Activated CD8-positive, alpha-beta memory T cell treated with anti-CD3 and anti-CD28 coated beads, Interleukin-2, amount 10 ng/mL, durations not matched to agents 7 days and 5 days (primary cell): ENCODE measurements at regions of chr4 and their contacts with region 1.

Region 1: GRCh38 chr4:123564758-123565346 is 168.3 kb downstream of the SPRY1 start:
- DNase-seq: peak; percentile 81
- ATAC-seq: peak; percentile 100
- H3K4me3 Mint-ChIP-seq: no peak overlapping the region
- H3K27ac Mint-ChIP-seq: no peak overlapping the region
- H3K4me1 Mint-ChIP-seq: peaks cover 13% of the 10 kb centered on the region
- H3K27me3 Mint-ChIP-seq: peaks cover 4% of the 10 kb centered on the region

Region 2: GRCh38 chr4:123396307-123397143 is 168.3 kb before region 1 on chr4 and contains the start of gene SPRY1:
- CTCF ChIA-PET with region 1: interaction called, 14 read pairs
- DNase-seq: peak; percentile 95
- ATAC-seq: peak; percentile 63
- H3K4me3 Mint-ChIP-seq: peak within 1 kb of the TSS; percentile 92
- H3K27ac Mint-ChIP-seq: peak within 1 kb of the TSS; percentile 92
- H3K4me1 Mint-ChIP-seq: peaks cover 24% of the 10 kb centered on the region
- H3K27me3 Mint-ChIP-seq: peaks cover 7% of the 10 kb centered on the region
- total RNA-seq, gene SPRY1: 73.7 to 126 TPM

Region 3: GRCh38 chr4:123580981-123581664 is 16.3 kb after region 1 on chr4:
- CTCF ChIA-PET with region 1: interaction called, 21 read pairs
- DNase-seq: no peak
- ATAC-seq: no peak
- H3K4me3 Mint-ChIP-seq: no peak overlapping the region
- H3K27ac Mint-ChIP-seq: no peak overlapping the region
- H3K4me1 Mint-ChIP-seq: peaks cover 1% of the 10 kb centered on the region
- H3K27me3 Mint-ChIP-seq: no peaks in the 10 kb centered on the region

Region 4: DNA sequence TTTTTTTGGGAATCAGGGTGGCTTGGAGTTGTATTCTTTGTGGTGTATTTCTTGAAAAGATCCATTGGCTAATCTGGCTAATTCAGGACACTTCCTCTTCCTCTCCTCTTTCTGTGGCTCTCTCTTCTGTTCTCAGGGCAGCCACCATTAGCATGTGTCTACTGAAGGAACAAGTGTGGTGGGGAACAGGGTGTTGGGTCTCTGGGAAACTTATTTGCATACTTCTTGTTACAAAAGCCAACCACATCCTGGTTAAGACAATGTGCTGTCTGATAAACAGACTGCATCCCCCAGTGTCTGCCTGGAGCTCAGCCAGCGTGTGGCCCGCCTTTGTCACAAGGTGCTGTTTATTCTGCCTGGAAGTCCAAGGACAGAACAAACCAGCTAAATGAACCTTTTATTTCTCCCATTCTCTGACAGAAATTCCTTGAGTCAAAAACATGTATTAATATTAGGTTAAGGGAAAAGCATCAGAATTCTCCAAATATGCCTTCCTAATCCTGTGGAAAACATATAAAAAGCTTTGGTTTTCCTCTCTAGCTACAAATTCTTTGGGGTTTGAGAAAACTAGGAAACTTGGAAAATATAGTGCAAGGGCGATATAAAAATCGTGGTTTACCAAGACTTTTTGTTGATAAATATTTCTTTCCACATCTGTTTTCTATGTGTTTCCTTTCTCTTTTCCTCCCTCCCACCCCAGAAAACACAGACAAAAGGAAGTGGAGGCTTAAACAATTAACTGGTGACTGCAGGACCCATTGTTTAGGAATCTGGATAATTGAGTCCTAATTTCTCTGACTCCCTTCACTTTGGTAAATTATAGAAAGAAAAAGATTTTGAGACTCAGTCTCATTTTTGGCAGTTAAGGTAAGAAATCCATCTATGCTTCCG is 35.3 kb after region 1 on chr4:
- CTCF ChIA-PET with region 1: interaction called, 12 read pairs
- DNase-seq: peak; percentile 84
- ATAC-seq: peak; percentile 97
- H3K4me3 Mint-ChIP-seq: peak overlapping the region; percentile 8
- H3K27ac Mint-ChIP-seq: peak overlapping the region; percentile 86
- H3K4me1 Mint-ChIP-seq: peaks cover 62% of the 10 kb centered on the region
- H3K27me3 Mint-ChIP-seq: no peaks in the 10 kb centered on the region

Region 5: DNA sequence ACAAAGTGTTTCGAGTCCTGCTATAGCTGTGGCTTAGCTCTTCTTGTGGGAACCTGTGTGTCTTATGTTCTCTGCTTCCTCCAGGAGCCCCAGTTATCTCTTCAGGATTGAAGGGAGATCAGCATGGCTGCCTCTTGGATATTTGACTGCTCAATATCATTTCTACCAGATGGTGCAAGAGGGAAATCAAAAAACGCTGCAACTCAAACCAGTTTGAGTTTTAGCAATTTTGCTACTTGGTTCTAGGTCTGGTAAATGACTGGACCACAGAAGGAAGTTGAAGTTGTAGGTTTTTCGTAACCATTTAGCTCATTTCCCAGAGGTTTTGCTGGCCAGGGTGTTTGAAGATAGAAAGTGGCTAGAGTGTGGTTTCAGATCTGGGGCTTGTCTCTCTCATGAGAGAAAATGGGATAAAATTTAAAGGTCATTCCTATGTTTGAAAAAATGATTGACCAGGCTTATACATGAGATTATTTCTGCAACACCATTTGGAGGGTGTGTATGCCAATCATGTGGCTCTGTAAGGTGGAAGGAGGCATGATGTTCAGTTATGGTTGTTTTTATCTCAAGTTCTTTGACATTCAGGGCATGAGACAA is 42.2 kb after region 1 on chr4:
- CTCF ChIA-PET with region 1: interaction called, 12 read pairs
- DNase-seq: peak; percentile 63
- ATAC-seq: peak; percentile 77
- H3K4me3 Mint-ChIP-seq: peak overlapping the region; percentile 42
- H3K27ac Mint-ChIP-seq: peak overlapping the region; percentile 93
- H3K4me1 Mint-ChIP-seq: peaks cover 51% of the 10 kb centered on the region
- H3K27me3 Mint-ChIP-seq: no peaks in the 10 kb centered on the region

Region 6: GRCh38 chr4:123661080-123661737 is 96.4 kb after region 1 on chr4:
- CTCF ChIA-PET with region 1: interaction called, 33 read pairs
- DNase-seq: no peak
- ATAC-seq: no peak
- H3K4me3 Mint-ChIP-seq: no peak overlapping the region
- H3K27ac Mint-ChIP-seq: no peak overlapping the region
- H3K4me1 Mint-ChIP-seq: peaks cover 11% of the 10 kb centered on the region
- H3K27me3 Mint-ChIP-seq: peaks cover 11% of the 10 kb centered on the region